ENCODE measurements at regions of chr2 and their contacts with region 1.

Region 1: GRCh38 chr2:9555297-9556141 is at the start of gene ADAM17:
- DNase-seq: peak; percentile 79 to 99 (median 88)

Region 2: DNA sequence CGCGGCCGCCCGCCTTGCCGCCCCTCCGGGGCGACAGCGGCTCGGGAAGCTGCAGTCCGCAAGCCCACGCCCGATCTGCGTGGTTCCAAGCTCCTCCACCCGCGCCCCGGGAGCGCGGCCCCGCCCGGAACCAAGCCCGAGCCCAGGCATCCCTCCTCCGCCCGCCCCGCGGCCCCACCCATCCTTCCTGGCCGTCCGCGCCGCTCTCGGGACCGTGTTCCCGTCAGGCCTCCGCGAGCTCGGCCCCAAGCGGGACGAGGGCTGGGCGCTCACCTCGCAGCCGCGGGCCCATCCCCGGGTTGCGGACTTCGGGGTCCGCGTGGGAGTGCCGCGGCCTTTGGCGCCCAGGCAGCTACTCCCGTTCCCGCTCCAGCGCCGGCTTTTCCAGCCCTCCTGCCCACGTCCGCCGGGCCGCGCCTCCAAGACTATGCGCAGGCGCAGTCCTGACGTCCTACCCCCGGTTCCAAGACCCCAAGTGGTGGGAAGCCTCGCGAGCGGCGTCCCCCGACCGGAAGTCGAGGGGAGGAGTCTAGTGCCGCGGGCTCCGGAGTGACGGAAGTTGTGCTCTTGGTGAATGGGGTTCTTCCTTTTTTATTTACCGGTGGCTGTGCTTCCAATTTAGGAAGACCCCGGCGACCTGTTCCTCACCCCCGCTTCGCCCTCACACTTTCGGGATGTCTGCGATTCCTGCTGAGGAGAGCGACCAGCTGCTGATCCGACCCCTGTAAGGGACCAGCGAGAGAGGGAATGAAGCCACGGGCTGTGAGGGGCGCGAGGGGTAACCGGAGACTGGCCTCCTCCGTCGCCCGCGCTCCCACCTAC is 132.2 kb before region 1 on chr2 and contains the starts of genes CPSF3 and ITGB1BP1:
- intact Hi-C with region 1: loop called (anchors 10 kb)
- DNase-seq: peak; percentile 95 to 100 (median 96)

Region 3: GRCh38 chr2:9474361-9474967 is 81.1 kb before region 1 on chr2 and contains the start of gene IAH1:
- intact Hi-C with region 1: loop called (anchors 2 kb)
- DNase-seq: peak; percentile 53 to 96 (median 72)

Region 4: GRCh38 chr2:9630749-9631483 is 75.4 kb after region 1 on chr2 and contains the start of gene YWHAQ:
- intact Hi-C with region 1: loop called (anchors 2 kb)
- DNase-seq: peak; percentile 97 to 100 (median 98)

Region 5: DNA sequence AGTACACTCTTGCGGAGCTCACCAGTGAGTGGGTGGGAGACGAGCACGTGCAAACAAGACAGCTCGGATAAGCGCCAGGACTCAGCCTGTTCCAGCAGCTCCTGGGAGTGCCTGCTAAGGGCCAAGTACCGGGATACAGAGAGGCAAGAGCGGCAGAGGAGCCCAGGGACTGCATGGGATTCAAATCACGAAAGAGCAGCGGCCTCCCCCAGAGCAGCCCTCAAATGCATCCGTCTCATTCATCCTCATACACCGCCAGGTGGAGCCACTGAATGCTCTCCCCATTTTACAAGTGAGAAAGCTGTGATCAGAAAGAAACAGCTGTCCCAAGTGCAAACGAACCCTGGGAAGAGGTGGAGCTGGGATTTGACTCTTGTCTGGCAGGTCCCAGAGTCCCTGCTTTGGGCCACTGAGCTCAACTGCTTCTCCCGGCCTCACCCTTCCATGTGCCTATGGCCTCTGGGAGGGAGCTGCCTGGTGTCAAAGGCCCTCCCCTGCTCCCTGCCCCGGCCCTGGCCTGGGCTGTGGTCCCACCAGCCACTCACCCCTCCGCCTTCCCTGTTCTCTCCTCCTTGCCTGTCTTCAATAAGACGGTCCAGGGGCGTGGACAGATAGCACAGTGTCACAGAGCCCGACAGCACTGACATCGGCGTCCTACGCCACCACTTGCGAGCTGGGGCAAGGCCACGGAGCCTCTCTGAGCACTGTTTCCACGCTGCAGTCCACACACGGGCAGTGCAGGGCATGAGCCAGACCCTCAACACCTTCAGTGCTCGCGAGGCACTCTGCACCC is 215.0 kb after region 1 on chr2:
- intact Hi-C with region 1: loop called (anchors 5 kb)
- DNase-seq: peak; percentile 53 to 96 (median 80)